ENCODE measurements at regions of chr10 and their contacts with region 1.

Region 1: GRCh38 chr10:107103174-107104025 is 61.1 kb downstream of the SORCS1 start:
- DNase-seq: no peak
- ATAC-seq: no peak
- H3K4me3 ChIP-seq: no peak overlapping the region
- H3K27ac ChIP-seq: no peak overlapping the region
- H3K4me1 ChIP-seq: no peaks in the 10 kb centered on the region
- H3K27me3 ChIP-seq: no peaks in the 10 kb centered on the region
- CTCF ChIP-seq: no peak

Region 2: GRCh38 chr10:107059068-107059804 is 44.2 kb before region 1 on chr10:
- CTCF ChIA-PET with region 1: no interaction called
- POLR2A ChIA-PET with region 1: no interaction called
- in situ Hi-C with region 1: no loop called
- intact Hi-C with region 1: loop called (anchors 1 kb)
- DNase-seq: no peak
- ATAC-seq: no peak
- H3K4me3 ChIP-seq: no peak overlapping the region
- H3K27ac ChIP-seq: no peak overlapping the region
- H3K4me1 ChIP-seq: no peaks in the 10 kb centered on the region
- H3K27me3 ChIP-seq: no peaks in the 10 kb centered on the region
- CTCF ChIP-seq: no peak

Measured in Panc1 (cell line).